B cell (primary cell): ENCODE measurements at regions of chr11 and their contacts with region 1.

Region 1: GRCh38 chr11:6705905-6706535 is 22.9 kb upstream of the MRPL17 start:
- DNase-seq: peak; percentile 62
- ATAC-seq: peak; percentile 78
- H3K4me3 ChIP-seq: no peak overlapping the region
- H3K4me3 Mint-ChIP-seq: no peak overlapping the region
- H3K27ac ChIP-seq: peak overlapping the region in 1 of 2 donors; percentile 35
- H3K27ac Mint-ChIP-seq: peak overlapping the region; percentile 60
- H3K4me1 ChIP-seq: peaks cover 0 to 4% of the 10 kb centered on the region in 2 donors
- H3K4me1 Mint-ChIP-seq: peaks cover 21% of the 10 kb centered on the region
- H3K27me3 ChIP-seq: no peaks in the 10 kb centered on the region
- H3K27me3 Mint-ChIP-seq: no peaks in the 10 kb centered on the region
- CTCF ChIP-seq: peak; percentile 95

Region 2: GRCh38 chr11:6531267-6531752 is 174.7 kb before region 1 on chr11:
- CTCF ChIA-PET with region 1: interaction called, 104 read pairs
- POLR2A ChIA-PET with region 1: no interaction called
- intact Hi-C with region 1: loop called (anchors 1 kb)
- DNase-seq: peak; percentile 66
- ATAC-seq: peak; percentile 57
- H3K4me3 ChIP-seq: no peak overlapping the region
- H3K4me3 Mint-ChIP-seq: no peak overlapping the region
- H3K27ac ChIP-seq: no peak overlapping the region
- H3K27ac Mint-ChIP-seq: no peak overlapping the region
- H3K4me1 ChIP-seq: peaks cover 4 to 5% of the 10 kb centered on the region in 2 donors
- H3K4me1 Mint-ChIP-seq: peaks cover 5% of the 10 kb centered on the region
- H3K27me3 ChIP-seq: no peaks in the 10 kb centered on the region
- H3K27me3 Mint-ChIP-seq: no peaks in the 10 kb centered on the region
- CTCF ChIP-seq: peak; percentile 83

Region 3: GRCh38 chr11:6637871-6638270 is 68.1 kb before region 1 on chr11:
- CTCF ChIA-PET with region 1: no interaction called
- POLR2A ChIA-PET with region 1: no interaction called
- intact Hi-C with region 1: no loop called
- DNase-seq: no peak
- ATAC-seq: no peak
- H3K4me3 ChIP-seq: no peak overlapping the region
- H3K4me3 Mint-ChIP-seq: no peak overlapping the region
- H3K27ac ChIP-seq: no peak overlapping the region
- H3K27ac Mint-ChIP-seq: no peak overlapping the region
- H3K4me1 ChIP-seq: peaks cover 0 to 3% of the 10 kb centered on the region in 2 donors
- H3K4me1 Mint-ChIP-seq: no peaks in the 10 kb centered on the region
- H3K27me3 ChIP-seq: no peaks in the 10 kb centered on the region
- H3K27me3 Mint-ChIP-seq: no peaks in the 10 kb centered on the region
- CTCF ChIP-seq: no peak

Region 4: GRCh38 chr11:6695377-6695776 is 10.6 kb before region 1 on chr11:
- CTCF ChIA-PET with region 1: interaction called, 11 read pairs
- POLR2A ChIA-PET with region 1: no interaction called
- intact Hi-C with region 1: no loop called
- DNase-seq: no peak
- ATAC-seq: no peak
- H3K4me3 ChIP-seq: no peak overlapping the region
- H3K4me3 Mint-ChIP-seq: no peak overlapping the region
- H3K27ac ChIP-seq: no peak overlapping the region
- H3K27ac Mint-ChIP-seq: no peak overlapping the region
- H3K4me1 ChIP-seq: no peaks in the 10 kb centered on the region
- H3K4me1 Mint-ChIP-seq: no peaks in the 10 kb centered on the region
- H3K27me3 ChIP-seq: no peaks in the 10 kb centered on the region
- H3K27me3 Mint-ChIP-seq: no peaks in the 10 kb centered on the region
- CTCF ChIP-seq: no peak

Region 5: DNA sequence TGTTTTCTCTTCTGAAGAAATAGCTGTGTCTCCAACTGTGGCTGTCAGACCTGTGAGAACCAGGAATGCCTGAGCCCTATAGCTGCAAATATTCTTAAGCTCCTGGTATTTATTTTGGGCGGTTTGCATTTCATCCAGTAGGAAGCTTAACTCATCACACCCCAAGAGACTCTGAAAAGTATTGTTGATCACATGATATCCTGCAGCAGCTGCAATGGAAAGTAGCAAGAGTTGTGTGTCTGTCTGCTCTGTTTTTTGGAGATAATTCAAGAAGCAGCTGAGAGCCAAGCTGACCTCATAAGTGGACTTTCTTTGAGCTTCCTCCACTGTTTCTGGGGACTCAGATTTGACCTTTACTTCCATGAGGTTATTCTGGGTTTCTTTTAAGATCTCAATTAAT is 13.6 kb after region 1 on chr11:
- CTCF ChIA-PET with region 1: interaction called, 24 read pairs
- POLR2A ChIA-PET with region 1: no interaction called
- intact Hi-C with region 1: no loop called
- DNase-seq: no peak
- ATAC-seq: no peak
- H3K4me3 ChIP-seq: no peak overlapping the region
- H3K4me3 Mint-ChIP-seq: no peak overlapping the region
- H3K27ac ChIP-seq: no peak overlapping the region
- H3K27ac Mint-ChIP-seq: no peak overlapping the region
- H3K4me1 ChIP-seq: peaks cover 9 to 13% of the 10 kb centered on the region in 2 donors
- H3K4me1 Mint-ChIP-seq: peaks cover 46% of the 10 kb centered on the region
- H3K27me3 ChIP-seq: no peaks in the 10 kb centered on the region
- H3K27me3 Mint-ChIP-seq: no peaks in the 10 kb centered on the region
- CTCF ChIP-seq: no peak

Region 6: DNA sequence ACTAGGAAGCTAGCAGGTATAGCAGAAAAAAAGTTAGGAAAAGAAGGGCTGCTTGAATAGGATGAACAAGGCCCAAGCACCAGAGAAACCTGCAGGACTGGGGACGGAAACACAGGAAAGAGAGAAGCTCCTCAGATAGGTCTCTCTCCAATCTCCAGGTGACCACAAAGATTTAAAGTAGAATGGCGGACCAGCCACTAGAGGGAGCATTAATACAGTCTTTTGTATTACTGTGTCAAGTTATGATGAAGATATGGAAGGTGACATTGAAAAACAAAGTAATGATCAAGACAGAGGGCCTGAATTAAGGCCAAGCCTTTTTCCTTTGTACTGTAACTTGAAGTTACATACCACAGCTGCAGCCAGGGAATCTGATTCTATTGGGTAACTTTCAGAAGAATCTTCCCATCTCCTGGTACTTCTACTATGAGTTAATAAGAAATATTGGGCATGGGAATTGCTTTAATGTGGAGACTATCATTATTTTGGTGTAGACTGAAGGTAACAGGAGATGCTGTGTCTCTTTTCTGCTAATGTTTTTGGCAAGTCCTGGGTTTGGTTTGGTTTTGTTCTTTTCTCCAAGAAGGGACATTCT is 31.9 kb after region 1 on chr11:
- CTCF ChIA-PET with region 1: interaction called, 12 read pairs
- POLR2A ChIA-PET with region 1: no interaction called
- intact Hi-C with region 1: no loop called
- DNase-seq: peak; percentile 82
- ATAC-seq: peak; percentile 86
- H3K4me3 ChIP-seq: no peak overlapping the region
- H3K4me3 Mint-ChIP-seq: no peak overlapping the region
- H3K27ac ChIP-seq: peak overlapping the region in 1 of 2 donors; percentile 68
- H3K27ac Mint-ChIP-seq: peak overlapping the region; percentile 39
- H3K4me1 ChIP-seq: peaks cover 49 to 60% of the 10 kb centered on the region in 2 donors
- H3K4me1 Mint-ChIP-seq: peaks cover 77% of the 10 kb centered on the region
- H3K27me3 ChIP-seq: no peaks in the 10 kb centered on the region
- H3K27me3 Mint-ChIP-seq: no peaks in the 10 kb centered on the region
- CTCF ChIP-seq: peak; percentile 79

Region 7: GRCh38 chr11:6746086-6746618 is 40.1 kb after region 1 on chr11:
- CTCF ChIA-PET with region 1: interaction called, 15 read pairs
- POLR2A ChIA-PET with region 1: no interaction called
- intact Hi-C with region 1: no loop called
- DNase-seq: peak; percentile 74
- ATAC-seq: peak; percentile 84
- H3K4me3 ChIP-seq: peak overlapping the region; percentile 54 to 95 (median 80)
- H3K4me3 Mint-ChIP-seq: no peak overlapping the region
- H3K27ac ChIP-seq: peak overlapping the region; percentile 83 to 95
- H3K27ac Mint-ChIP-seq: no peak overlapping the region
- H3K4me1 ChIP-seq: peaks cover 49 to 58% of the 10 kb centered on the region in 2 donors
- H3K4me1 Mint-ChIP-seq: peaks cover 25% of the 10 kb centered on the region
- H3K27me3 ChIP-seq: no peaks in the 10 kb centered on the region
- H3K27me3 Mint-ChIP-seq: no peaks in the 10 kb centered on the region
- CTCF ChIP-seq: no peak